ENCODE measurements at regions of chr7 and their contacts with region 1.

Region 1: GRCh38 chr7:101058355-101058754 is 26.9 kb upstream of the TRIM56 start:
- DNase-seq: peak; percentile 60
- H3K27ac ChIP-seq: no peak overlapping the region
- CTCF ChIP-seq: no peak

Region 2: GRCh38 chr7:100901921-100902332 is 156.4 kb before region 1 on chr7:
- CTCF ChIA-PET with region 1: interaction called, 17 read pairs
- POLR2A ChIA-PET with region 1: no interaction called
- DNase-seq: no peak
- H3K27ac ChIP-seq: no peak overlapping the region
- CTCF ChIP-seq: no peak

Region 3: GRCh38 chr7:101035941-101036340 is 22.4 kb before region 1 on chr7:
- CTCF ChIA-PET with region 1: no interaction called
- POLR2A ChIA-PET with region 1: no interaction called
- DNase-seq: no peak
- H3K27ac ChIP-seq: no peak overlapping the region
- CTCF ChIP-seq: no peak

Region 4: DNA sequence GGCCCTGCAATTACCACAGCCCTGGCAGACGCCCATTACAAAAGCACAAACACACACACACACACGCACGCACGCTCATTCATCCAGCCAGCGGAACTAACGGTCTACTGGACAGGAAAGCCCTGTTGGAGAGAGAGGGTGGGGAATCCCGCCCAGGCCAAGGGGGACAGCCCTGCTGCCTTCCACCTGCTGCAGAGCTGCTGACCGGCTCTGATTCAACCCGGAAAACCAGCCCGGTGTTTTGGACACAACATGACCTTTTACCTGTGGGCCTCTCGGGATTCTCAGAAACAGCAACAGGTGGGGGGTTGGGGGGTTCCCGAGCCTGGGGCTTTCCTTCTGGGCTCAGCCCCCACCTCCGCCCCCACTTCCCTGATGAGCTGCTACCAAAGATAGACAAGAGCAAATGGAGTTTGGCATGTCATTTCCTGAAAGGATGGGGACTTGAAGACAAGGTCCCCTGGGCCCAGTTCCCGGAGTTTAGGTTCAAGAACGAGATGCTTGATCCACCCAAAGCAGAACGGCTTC is 50.0 kb after region 1 on chr7:
- CTCF ChIA-PET with region 1: no interaction called
- POLR2A ChIA-PET with region 1: no interaction called
- DNase-seq: no peak
- H3K27ac ChIP-seq: peak overlapping the region; percentile 88
- CTCF ChIP-seq: no peak